HepG2 (cell line): ENCODE measurements at regions of chr19 and their contacts with region 1.

Region 1: GRCh38 chr19:8307965-8308866 is at the start of gene CD320:
- DNase-seq: peak; percentile 86
- ATAC-seq: peak; percentile 89
- H3K4me3 ChIP-seq: peak within 1 kb of the TSS; percentile 50 to 77 (median 66)
- H3K27ac ChIP-seq: peak within 1 kb of the TSS; percentile 85
- H3K4me1 ChIP-seq: peaks cover 39% of the 10 kb centered on the region
- H3K27me3 ChIP-seq: no peaks in the 10 kb centered on the region
- CTCF ChIP-seq: no peak; the same call in none of the 2 replicates
- EP300 ChIP-seq: no peak
- POLR2A ChIP-seq: peak; percentile 86 to 90
- RAD21 ChIP-seq: no peak; the same call in none of the 2 replicates
- total RNA-seq, gene CD320: 44.4 and 99.9 TPM in 2 replicates

Region 2: GRCh38 chr19:8054169-8054568 is 254.0 kb before region 1 on chr19:
- CTCF ChIA-PET with region 1: no interaction called
- POLR2A ChIA-PET with region 1: no interaction called
- in situ Hi-C with region 1: no loop called
- intact Hi-C with region 1: no loop called
- DNase-seq: no peak
- ATAC-seq: peak; percentile 47
- H3K4me3 ChIP-seq: peak overlapping the region in 1 of 3 experiments; percentile 33; a peak in 1 of 6 replicates
- H3K27ac ChIP-seq: no peak overlapping the region
- H3K4me1 ChIP-seq: peaks cover 24% of the 10 kb centered on the region
- H3K27me3 ChIP-seq: no peaks in the 10 kb centered on the region; a peak in 1 of 5 replicates
- CTCF ChIP-seq: no peak
- EP300 ChIP-seq: no peak
- POLR2A ChIP-seq: no peak
- RAD21 ChIP-seq: no peak

Region 3: GRCh38 chr19:8261347-8262310 is 46.6 kb before region 1 on chr19:
- CTCF ChIA-PET with region 1: no interaction called
- POLR2A ChIA-PET with region 1: no interaction called
- in situ Hi-C with region 1: loop called (anchors 5 kb)
- intact Hi-C with region 1: no loop called
- DNase-seq: no peak
- ATAC-seq: no peak
- H3K4me3 ChIP-seq: no peak overlapping the region
- H3K27ac ChIP-seq: no peak overlapping the region
- H3K4me1 ChIP-seq: peaks cover 31% of the 10 kb centered on the region
- H3K27me3 ChIP-seq: no peaks in the 10 kb centered on the region
- CTCF ChIP-seq: no peak
- EP300 ChIP-seq: no peak
- POLR2A ChIP-seq: no peak; a peak in 1 of 4 replicates
- RAD21 ChIP-seq: no peak

Region 4: GRCh38 chr19:8333771-8334457 is 25.7 kb after region 1 on chr19:
- CTCF ChIA-PET with region 1: no interaction called
- POLR2A ChIA-PET with region 1: no interaction called
- in situ Hi-C with region 1: no loop called
- intact Hi-C with region 1: no loop called
- DNase-seq: no peak
- ATAC-seq: peak; percentile 22; the same call in 1 of the 3 replicates
- H3K4me3 ChIP-seq: peak overlapping the region in 1 of 3 experiments; percentile 65; a peak in 2 of 6 replicates
- H3K27ac ChIP-seq: no peak overlapping the region
- H3K4me1 ChIP-seq: peaks cover 42% of the 10 kb centered on the region
- H3K27me3 ChIP-seq: peaks cover 10 to 56% of the 10 kb centered on the region in 2 experiments
- CTCF ChIP-seq: no peak
- EP300 ChIP-seq: no peak
- POLR2A ChIP-seq: no peak
- RAD21 ChIP-seq: no peak

Region 5: DNA sequence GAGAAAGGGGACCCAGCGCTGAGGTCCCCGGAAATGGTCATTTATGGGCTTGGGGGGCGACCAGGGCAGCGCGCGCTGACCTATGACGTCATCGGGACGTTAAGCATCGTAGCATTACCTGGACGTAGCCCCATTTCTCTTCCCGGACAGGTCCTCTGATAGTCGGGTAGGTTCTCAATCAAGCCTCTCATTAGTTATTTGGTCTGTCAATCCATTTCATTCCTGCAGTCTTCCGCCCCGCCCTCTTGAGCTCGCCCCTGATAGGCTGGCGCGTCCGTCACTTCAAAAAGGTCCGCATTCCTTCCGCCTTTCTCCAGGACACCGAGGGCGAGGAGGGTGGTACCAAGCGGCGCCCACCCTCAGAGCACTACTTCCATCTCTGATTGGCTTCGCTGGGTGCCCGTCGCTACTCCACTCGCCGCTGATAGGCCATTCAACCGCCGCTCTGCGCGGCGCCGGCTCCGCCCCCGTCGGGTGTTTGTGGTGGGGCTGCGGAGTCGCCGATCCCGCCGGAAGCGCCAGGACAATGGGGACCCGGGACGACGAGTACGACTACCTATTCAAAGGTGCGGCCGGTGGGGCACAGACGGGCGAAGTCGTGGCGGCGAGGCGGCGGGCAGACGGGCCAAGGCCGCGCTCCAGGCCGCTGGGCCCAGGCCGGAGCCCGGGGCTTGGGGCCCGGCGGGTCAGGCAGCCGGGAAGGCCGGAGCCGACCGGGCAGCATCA is 81.8 kb after region 1 on chr19 and contains the start of gene RAB11B:
- CTCF ChIA-PET with region 1: no interaction called
- POLR2A ChIA-PET with region 1: no interaction called
- in situ Hi-C with region 1: no loop called
- intact Hi-C with region 1: no loop called
- DNase-seq: peak; percentile 99
- ATAC-seq: peak; percentile 92
- H3K4me3 ChIP-seq: peak within 1 kb of the TSS; percentile 84 to 86 (median 85)
- H3K27ac ChIP-seq: peak within 1 kb of the TSS; percentile 96
- H3K4me1 ChIP-seq: peaks cover 87% of the 10 kb centered on the region
- H3K27me3 ChIP-seq: no peaks in the 10 kb centered on the region
- CTCF ChIP-seq: no peak
- EP300 ChIP-seq: 0 out of 4 replicates have a peak, but pooled peaks have one; percentile 4 to 8
- POLR2A ChIP-seq: peak; percentile 50 to 77
- RAD21 ChIP-seq: peak; percentile 51; the same call in 1 of the 2 replicates
- total RNA-seq, gene RAB11B: 6.0 and 11.5 TPM in 2 replicates